ENCODE measurements at regions of chr1 and their contacts with region 1.

Region 1: GRCh38 chr1:241081473-241081872 is 275.5 kb downstream of the RGS7 start:
- DNase-seq: no peak

Region 2: DNA sequence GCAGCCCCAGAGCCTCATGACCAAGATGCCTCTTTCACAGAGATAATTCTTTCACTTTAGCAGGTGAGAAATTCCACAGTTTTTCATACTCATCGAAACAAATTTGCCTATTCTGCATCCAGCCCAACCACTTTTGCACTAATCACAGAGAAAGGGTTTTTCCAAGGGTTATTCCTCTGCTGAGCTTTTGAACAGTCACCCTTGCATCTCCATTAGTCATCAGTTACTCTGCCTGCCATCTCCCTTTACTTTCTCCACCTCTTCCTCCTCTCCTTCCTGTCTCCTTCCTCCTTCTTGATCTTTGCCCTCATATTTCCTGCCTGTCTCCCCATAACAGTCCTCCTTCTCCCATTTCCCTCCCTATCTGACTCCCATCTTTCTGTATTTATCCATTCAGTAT is 394.2 kb after region 1 on chr1:
- intact Hi-C with region 1: loop called in 1 of 2 experiments (anchors 5 kb)
- DNase-seq: no peak

Region 3: DNA sequence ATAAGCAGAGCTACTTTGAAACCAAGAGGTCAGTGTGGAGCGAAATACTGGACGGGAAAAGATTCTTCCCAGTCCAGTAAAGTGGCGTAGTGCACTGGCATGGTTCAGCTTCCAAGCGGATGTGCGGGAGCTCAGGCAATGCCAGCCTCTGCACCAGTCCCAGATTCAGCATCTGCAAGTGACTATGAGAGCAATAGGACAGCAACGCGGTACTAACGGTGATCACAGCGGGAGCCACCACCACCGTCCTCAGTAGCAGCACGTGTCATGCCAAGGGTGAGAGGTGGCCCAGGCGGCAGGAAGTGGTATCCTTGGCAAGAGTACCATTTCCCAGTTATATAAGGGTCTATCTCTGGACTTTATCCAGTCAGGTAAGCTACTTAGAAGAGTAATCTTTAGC is 1425.3 kb after region 1 on chr1:
- intact Hi-C with region 1: no loop called
- DNase-seq: no peak